Naive thymus-derived CD8-positive, alpha-beta T cell (primary cell): ENCODE measurements at regions of chr20 and their contacts with region 1.

Region 1: GRCh38 chr20:50731055-50731871 is at the start of gene PARD6B:
- DNase-seq: peak; percentile 95 to 100 (median 100)
- ATAC-seq: peak; percentile 90 to 93
- H3K4me3 Mint-ChIP-seq: peak within 1 kb of the TSS; percentile 78 to 94 (median 89)
- H3K27ac Mint-ChIP-seq: peak within 1 kb of the TSS in 9 of 10 donors; percentile 62 to 93 (median 90)
- H3K4me1 Mint-ChIP-seq: peaks cover 6 to 34% (median 28%) of the 10 kb centered on the region in 4 donors
- H3K27me3 Mint-ChIP-seq: no peaks in the 10 kb centered on the region
- polyA plus RNA-seq, gene PARD6B: 0.49 to 2.0 (median 1.4) TPM

Region 2: DNA sequence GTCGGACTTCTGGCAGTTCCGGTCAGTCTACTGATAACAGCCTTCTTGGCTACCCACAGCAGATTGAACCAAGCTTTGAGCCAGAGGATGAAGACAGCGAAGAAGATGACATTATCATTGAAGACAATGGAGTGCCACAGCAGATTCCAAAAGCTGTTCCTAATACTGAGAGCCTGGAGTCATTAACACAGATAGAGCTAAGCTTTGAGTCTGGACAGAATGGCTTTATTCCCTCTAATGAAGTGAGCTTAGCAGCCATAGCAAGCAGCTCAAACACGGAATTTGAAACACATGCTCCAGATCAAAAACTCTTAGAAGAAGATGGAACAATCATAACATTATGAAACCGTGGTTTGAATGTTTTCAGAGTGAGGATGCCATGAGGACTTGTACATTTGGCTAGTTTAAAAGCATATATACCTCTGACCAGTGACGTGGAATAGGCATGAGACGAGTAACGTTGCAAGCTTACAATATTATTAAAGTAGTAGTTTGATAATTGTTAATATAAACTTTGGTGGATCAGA is 18.9 kb after region 1 on chr20:
- POLR2A ChIA-PET with region 1: interaction called, 11 read pairs
- DNase-seq: no peak
- ATAC-seq: no peak
- H3K4me3 Mint-ChIP-seq: no peak overlapping the region
- H3K27ac Mint-ChIP-seq: no peak overlapping the region
- H3K4me1 Mint-ChIP-seq: peaks cover 6 to 17% (median 10%) of the 10 kb centered on the region in 4 donors
- H3K27me3 Mint-ChIP-seq: no peaks in the 10 kb centered on the region